ENCODE measurements at regions of chr19 and their contacts with region 1.

Region 1: DNA sequence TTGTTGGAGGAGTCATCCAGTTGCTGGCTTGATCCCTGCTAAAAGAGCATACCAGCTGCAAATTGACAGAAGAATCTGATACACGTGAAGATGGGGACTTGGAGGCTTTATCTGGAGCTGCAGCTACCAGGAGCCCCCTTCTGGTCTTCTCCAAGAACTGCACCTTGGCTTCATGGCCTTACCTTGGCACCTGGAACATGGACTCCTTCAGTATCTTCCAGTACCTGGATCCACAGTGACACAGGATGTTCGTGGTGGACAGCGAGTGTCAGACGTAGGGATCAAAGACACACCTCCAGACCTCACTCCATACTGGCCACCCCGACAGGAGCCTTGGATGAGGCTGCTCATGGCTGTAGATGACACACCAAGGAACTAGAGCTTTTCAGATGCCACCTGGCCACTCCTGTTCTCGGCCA is 9.9 kb upstream of the ACSBG2 start:
- DNase-seq: peak; percentile 75
- H3K4me3 Mint-ChIP-seq: no peak overlapping the region
- H3K27ac Mint-ChIP-seq: no peak overlapping the region
- H3K4me1 Mint-ChIP-seq: no peaks in the 10 kb centered on the region
- H3K27me3 Mint-ChIP-seq: no peaks in the 10 kb centered on the region

Region 2: GRCh38 chr19:6042776-6043733 is 82.5 kb before region 1 on chr19:
- CTCF ChIA-PET with region 1: interaction called, 73 read pairs
- DNase-seq: no peak
- H3K4me3 Mint-ChIP-seq: no peak overlapping the region
- H3K27ac Mint-ChIP-seq: no peak overlapping the region
- H3K4me1 Mint-ChIP-seq: no peaks in the 10 kb centered on the region
- H3K27me3 Mint-ChIP-seq: no peaks in the 10 kb centered on the region

Region 3: GRCh38 chr19:6048808-6049405 is 76.7 kb before region 1 on chr19:
- CTCF ChIA-PET with region 1: interaction called, 73 read pairs
- DNase-seq: peak; percentile 87
- H3K4me3 Mint-ChIP-seq: no peak overlapping the region
- H3K27ac Mint-ChIP-seq: no peak overlapping the region
- H3K4me1 Mint-ChIP-seq: peaks cover 4% of the 10 kb centered on the region
- H3K27me3 Mint-ChIP-seq: peaks cover 12% of the 10 kb centered on the region

Region 4: DNA sequence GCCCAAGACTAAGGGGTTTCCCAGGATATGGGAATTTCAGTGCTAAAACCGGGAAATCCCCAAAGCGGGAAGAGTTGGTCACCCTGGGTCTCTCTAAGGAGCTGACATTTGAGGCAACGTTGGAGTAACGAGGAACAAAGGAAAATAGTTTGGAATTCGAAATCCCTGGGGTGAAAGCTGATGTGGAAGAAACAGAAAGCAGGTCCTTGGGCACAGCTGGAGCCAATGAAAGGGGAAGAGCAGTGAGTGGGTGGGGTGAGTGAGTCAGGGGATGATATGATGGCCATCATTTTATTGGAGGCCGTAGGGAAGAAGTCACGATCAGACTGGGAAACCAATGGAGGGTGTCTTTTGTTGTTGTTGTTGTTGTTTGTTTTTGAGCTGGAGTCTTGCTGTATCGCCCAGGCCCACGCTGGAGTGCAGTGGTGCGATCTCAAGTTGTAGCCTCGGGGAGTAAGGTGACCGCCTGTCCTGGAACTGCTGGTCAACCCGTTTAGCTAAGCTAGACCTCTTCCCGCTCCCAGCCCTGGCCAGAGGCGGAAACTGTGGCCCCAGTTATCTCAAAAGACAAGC is 11.9 kb before region 1 on chr19:
- CTCF ChIA-PET with region 1: interaction called, 26 read pairs
- DNase-seq: no peak
- H3K4me3 Mint-ChIP-seq: no peak overlapping the region
- H3K27ac Mint-ChIP-seq: no peak overlapping the region
- H3K4me1 Mint-ChIP-seq: peaks cover 21% of the 10 kb centered on the region
- H3K27me3 Mint-ChIP-seq: peaks cover 49% of the 10 kb centered on the region

Region 5: DNA sequence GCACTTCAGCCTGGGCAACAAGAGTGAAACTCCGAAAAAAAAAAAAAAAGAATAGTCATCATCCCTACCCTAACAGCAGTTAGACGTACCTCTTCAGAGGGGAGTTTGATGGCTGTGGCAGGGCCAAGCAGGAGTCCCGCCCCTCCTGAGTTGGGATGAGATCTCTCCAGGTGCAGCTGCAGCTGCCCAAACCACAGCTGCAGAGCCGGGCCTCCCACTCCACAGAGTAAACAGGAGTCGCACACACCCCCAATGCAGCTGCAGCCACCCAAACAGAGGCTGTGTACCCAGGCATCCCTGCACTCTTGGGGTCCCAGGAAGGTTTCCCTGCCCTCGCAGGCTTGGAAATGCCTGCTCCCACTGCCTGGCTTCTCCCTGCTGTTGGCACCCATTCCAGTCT is 171.6 kb after region 1 on chr19:
- CTCF ChIA-PET with region 1: interaction called, 14 read pairs
- DNase-seq: no peak
- H3K4me3 Mint-ChIP-seq: no peak overlapping the region
- H3K27ac Mint-ChIP-seq: no peak overlapping the region
- H3K4me1 Mint-ChIP-seq: no peaks in the 10 kb centered on the region
- H3K27me3 Mint-ChIP-seq: no peaks in the 10 kb centered on the region

Measured in activated naive CD4-positive, alpha-beta T cell treated with anti-CD3 and anti-CD28 coated beads, Interleukin-2, amount 10 ng/mL, durations not matched to agents 7 days and 5 days (primary cell).